ENCODE measurements at regions of chr10 and their contacts with region 1.

Region 1: DNA sequence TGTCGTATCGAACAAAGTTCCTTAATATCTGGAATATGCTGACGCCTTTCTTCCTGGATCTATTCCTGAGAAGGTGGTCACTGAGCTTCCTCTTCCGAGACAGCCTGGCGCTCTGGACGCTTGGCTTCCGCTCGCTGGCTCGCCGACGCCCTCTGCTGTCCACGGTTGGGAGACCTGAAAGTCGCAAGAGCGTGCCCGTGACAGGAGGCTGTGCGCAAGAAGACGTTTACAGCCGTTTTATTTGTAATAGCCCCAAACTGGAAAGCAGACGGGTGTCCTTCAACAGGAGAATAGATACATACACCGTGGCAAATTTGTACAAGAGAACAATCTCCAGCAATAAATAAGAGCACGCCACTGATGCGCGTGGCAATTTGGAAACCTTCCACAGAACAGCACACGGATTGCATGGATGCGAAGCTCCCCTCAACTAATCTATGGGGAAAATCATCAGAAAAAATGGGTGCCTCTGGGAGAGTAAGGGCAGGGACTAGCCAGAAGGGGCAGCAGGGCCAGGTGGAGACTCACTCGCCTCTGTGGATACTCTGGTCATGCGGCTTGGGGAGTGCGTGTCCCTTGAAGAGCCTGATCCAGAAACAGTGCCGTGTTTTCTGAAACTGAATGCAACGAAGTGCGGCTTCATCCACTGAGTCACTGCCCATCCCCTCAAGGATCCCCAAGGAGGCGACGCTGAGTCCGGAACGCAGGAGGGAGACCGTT is 41.5 kb upstream of the BNIP3 start:
- DNase-seq: no peak
- ATAC-seq: peak; percentile 92
- H3K4me3 ChIP-seq: no peak overlapping the region
- H3K27ac ChIP-seq: no peak overlapping the region
- H3K4me1 ChIP-seq: no peaks in the 10 kb centered on the region
- H3K27me3 ChIP-seq: no peaks in the 10 kb centered on the region; a peak in 1 of 4 replicates
- CTCF ChIP-seq: peak; percentile 74 to 93 (median 83)
- EP300 ChIP-seq: no peak
- POLR2A ChIP-seq: no peak
- RAD21 ChIP-seq: peak; percentile 85

Region 2: GRCh38 chr10:130179640-130180039 is 1843.6 kb before region 1 on chr10:
- CTCF ChIA-PET with region 1: no interaction called
- POLR2A ChIA-PET with region 1: no interaction called
- RAD21 ChIA-PET with region 1: no interaction called
- SMC1A ChIA-PET with region 1: no interaction called
- in situ Hi-C with region 1: loop called (anchors 10 kb)
- intact Hi-C with region 1: no loop called
- DNase-seq: no peak
- ATAC-seq: no peak
- H3K4me3 ChIP-seq: no peak overlapping the region
- H3K27ac ChIP-seq: no peak overlapping the region
- H3K4me1 ChIP-seq: no peaks in the 10 kb centered on the region
- H3K27me3 ChIP-seq: no peaks in the 10 kb centered on the region
- CTCF ChIP-seq: peak in 2 of 3 experiments; percentile 5 to 33; a peak in 2 of 6 replicates
- EP300 ChIP-seq: no peak
- POLR2A ChIP-seq: no peak
- RAD21 ChIP-seq: peak; percentile 53

Region 3: DNA sequence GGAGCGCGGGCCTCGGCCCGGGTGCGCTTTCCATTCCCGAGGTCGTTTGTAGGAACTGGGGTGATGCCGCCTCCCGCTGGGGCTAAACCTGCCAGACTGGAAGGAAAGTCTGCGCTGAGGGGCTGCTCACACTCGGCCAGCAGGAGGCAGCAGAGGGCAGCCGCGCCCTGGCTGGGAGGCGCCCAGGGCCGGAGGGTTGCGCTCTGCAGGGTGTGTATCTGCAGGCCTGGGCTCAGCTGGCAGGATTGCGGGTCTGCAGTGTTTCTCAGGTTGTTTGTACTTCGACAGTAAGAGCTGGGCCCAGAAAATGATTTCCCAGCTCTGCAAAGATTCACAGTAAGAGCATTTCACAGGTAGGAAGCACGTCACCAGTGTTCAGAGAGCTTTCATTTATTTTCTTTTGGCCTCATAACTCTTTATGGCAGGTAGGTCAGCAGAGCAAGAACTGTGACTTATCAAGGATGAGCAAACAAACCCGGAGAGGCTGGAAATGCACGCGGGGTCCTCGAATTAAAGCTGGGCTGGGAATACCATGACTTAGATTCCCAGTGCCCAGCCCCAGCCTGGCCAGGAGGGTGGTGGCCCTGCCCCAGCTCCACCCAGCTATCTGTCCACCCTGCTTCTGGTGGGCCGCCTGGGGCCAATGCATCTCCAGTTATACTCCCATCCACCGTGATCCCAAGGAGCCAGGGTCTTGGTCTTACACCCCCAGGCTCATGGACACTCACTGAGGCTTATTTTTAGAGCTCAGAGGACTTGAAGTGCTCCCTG is 137.7 kb before region 1 on chr10:
- CTCF ChIA-PET with region 1: interaction called, 50 read pairs
- POLR2A ChIA-PET with region 1: no interaction called
- RAD21 ChIA-PET with region 1: interaction called, 30 read pairs
- SMC1A ChIA-PET with region 1: interaction called, 17 read pairs
- in situ Hi-C with region 1: loop called (anchors 5 kb)
- intact Hi-C with region 1: loop called (anchors 1 kb)
- DNase-seq: no peak
- ATAC-seq: peak; percentile 100
- H3K4me3 ChIP-seq: no peak overlapping the region
- H3K27ac ChIP-seq: no peak overlapping the region
- H3K4me1 ChIP-seq: no peaks in the 10 kb centered on the region
- H3K27me3 ChIP-seq: no peaks in the 10 kb centered on the region
- CTCF ChIP-seq: peak; percentile 94 to 97 (median 94)
- EP300 ChIP-seq: no peak
- POLR2A ChIP-seq: no peak
- RAD21 ChIP-seq: peak; percentile 94

Region 4: GRCh38 chr10:132011024-132011423 is 12.2 kb before region 1 on chr10:
- CTCF ChIA-PET with region 1: interaction called, 11 read pairs
- POLR2A ChIA-PET with region 1: no interaction called
- RAD21 ChIA-PET with region 1: interaction called, 3 read pairs
- SMC1A ChIA-PET with region 1: no interaction called
- in situ Hi-C with region 1: no loop called
- intact Hi-C with region 1: no loop called
- DNase-seq: no peak
- ATAC-seq: no peak
- H3K4me3 ChIP-seq: no peak overlapping the region
- H3K27ac ChIP-seq: no peak overlapping the region
- H3K4me1 ChIP-seq: no peaks in the 10 kb centered on the region
- H3K27me3 ChIP-seq: no peaks in the 10 kb centered on the region
- CTCF ChIP-seq: no peak
- EP300 ChIP-seq: no peak
- POLR2A ChIP-seq: no peak
- RAD21 ChIP-seq: no peak